ENCODE measurements at regions of chr13 and their contacts with region 1.

Region 1: DNA sequence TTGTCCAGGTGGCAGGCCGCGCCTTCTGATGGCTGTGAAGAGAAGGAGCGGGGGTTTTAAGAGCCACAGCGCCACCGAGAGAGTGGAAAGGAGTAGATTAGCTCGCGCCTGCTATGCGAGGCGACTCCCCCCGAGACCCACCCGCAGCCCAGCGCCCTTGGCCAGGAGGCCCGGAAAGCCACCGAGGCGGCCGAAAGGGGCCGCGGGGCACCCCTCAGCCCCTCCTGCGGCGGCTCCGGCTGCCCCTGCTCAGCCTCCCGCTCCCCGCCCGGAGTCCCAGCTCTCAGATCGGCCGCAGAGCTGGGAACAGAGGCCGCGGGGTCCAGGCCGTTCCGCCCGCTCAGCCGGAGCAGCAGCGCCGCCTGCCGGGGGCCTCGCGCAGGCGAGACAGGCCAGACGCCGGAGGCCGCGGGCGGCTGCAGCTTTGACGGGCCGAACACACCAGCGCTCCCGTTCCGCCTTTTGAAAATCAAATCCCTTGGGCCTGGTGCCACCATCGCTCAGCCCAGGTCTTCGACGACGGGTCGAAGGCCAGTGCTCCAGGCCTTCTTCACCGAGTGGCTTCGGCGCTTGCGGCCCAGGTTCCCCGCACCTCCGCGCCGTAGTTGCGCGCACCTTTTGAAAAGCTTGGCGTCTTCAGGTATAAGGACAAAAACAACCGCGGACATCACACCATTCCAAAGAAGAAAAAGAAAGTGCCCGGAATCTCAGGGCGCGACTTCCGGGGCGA is 15.3 kb downstream of the CDX2 start:
- DNase-seq: peak; percentile 85
- H3K4me3 ChIP-seq: peak overlapping the region; percentile 46
- H3K27ac ChIP-seq: no peak overlapping the region
- H3K4me1 ChIP-seq: no peaks in the 10 kb centered on the region
- H3K27me3 ChIP-seq: peaks cover 71% of the 10 kb centered on the region
- CTCF ChIP-seq: peak; percentile 73

Region 2: GRCh38 chr13:27374650-27375049 is 579.2 kb before region 1 on chr13:
- CTCF ChIA-PET with region 1: no interaction called
- POLR2A ChIA-PET with region 1: no interaction called
- intact Hi-C with region 1: loop called (anchors 10 kb)
- DNase-seq: peak; percentile 82
- H3K4me3 ChIP-seq: no peak overlapping the region
- H3K27ac ChIP-seq: no peak overlapping the region
- H3K4me1 ChIP-seq: no peaks in the 10 kb centered on the region
- H3K27me3 ChIP-seq: peaks cover 29% of the 10 kb centered on the region
- CTCF ChIP-seq: peak; percentile 77

Region 3: DNA sequence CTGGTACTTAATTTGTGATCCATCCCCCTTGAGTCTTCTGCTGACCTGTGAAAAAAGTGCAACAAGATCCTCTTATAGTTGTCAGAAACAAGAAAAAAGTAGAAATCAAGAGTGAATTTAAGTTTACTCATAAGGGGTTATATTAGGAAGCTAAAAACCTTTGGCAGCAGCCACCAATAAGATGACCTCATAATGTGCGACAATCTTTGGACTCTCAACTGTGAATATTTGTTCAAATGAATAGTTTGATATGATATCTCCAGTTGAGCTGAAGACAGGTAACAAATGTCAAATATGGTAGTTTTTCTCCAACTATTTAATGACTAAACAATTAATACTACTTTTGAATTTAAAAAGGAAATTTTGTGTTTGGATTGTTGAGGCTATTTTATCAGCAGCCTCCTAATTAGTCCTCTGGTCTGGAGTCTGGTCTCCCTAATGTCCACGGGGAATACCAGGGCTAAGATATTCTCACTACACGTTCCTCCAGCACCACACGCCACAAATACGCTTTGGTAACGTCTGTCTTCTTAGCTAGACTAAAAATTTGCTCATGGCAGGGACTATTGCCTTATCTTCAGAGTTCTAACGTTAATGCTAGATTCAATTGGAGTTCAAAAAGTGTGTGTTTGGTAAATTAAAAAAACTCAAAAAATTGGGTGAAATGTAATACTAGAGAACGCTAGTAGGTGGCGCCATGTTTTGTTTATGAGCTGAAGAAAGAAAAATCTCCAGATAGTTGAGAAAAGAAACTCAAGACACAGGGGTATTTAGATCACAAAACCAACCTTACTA is 85.0 kb before region 1 on chr13:
- CTCF ChIA-PET with region 1: interaction called, 18 read pairs
- POLR2A ChIA-PET with region 1: no interaction called
- intact Hi-C with region 1: loop called (anchors 5 kb)
- DNase-seq: peak; percentile 15
- H3K4me3 ChIP-seq: no peak overlapping the region
- H3K27ac ChIP-seq: no peak overlapping the region
- H3K4me1 ChIP-seq: no peaks in the 10 kb centered on the region
- H3K27me3 ChIP-seq: peaks cover 41% of the 10 kb centered on the region
- CTCF ChIP-seq: peak; percentile 71

Region 4: GRCh38 chr13:28138012-28138755 is 184.3 kb after region 1 on chr13 and contains the start of gene PAN3:
- CTCF ChIA-PET with region 1: no interaction called
- POLR2A ChIA-PET with region 1: no interaction called
- intact Hi-C with region 1: no loop called
- DNase-seq: peak; percentile 96
- H3K4me3 ChIP-seq: peak within 1 kb of the TSS; percentile 98
- H3K27ac ChIP-seq: peak within 1 kb of the TSS; percentile 100
- H3K4me1 ChIP-seq: peaks cover 12% of the 10 kb centered on the region
- H3K27me3 ChIP-seq: no peaks in the 10 kb centered on the region
- CTCF ChIP-seq: no peak
- total RNA-seq, gene PAN3: 41.5 and 46.1 TPM in 2 replicates